Activated naive CD4-positive, alpha-beta T cell treated with anti-CD3 and anti-CD28 coated beads, Interleukin-2, amount 10 ng/mL, durations not matched to agents 7 days and 5 days (primary cell): ENCODE measurements at regions of chr19 and their contacts with region 1.

Region 1: GRCh38 chr19:44570984-44571684 is 41.7 kb upstream of the CEACAM20 start:
- DNase-seq: peak; percentile 70
- H3K4me3 Mint-ChIP-seq: no peak overlapping the region
- H3K27ac Mint-ChIP-seq: no peak overlapping the region
- H3K4me1 Mint-ChIP-seq: no peaks in the 10 kb centered on the region
- H3K27me3 Mint-ChIP-seq: no peaks in the 10 kb centered on the region

Region 2: DNA sequence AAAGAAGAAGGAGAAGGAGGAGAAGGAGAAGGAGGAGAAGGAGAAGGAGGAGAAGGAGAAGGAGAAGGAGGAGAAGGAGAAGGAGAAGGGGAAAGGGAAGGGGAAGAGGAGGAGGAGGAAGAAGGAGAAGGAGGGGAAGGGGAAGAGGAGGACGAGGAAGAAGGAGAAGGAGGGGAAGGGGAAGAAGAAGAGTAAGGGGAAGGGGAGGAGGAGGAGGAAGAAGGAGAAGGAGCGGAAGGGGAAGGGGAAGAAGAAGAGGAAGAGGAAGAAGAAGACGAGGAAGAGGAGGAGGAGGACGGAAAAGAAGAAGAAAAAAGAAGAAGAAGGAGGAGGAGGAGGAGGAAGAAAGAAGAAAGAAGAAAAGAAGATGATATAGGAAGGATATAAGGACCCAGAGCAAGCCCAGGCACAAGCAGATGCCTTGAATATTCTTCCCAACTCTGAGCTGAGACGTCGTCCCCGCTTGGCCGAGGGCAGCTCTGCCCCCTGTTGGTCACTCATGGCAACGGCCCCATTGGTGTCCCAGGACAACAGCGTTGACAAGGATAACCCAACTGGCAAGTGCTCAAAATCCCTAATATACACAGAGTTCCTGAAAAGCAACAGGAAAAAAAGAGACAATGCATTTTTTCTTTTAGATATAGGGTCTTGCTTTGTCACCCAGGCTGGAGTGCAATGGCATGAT is 11.6 kb after region 1 on chr19:
- CTCF ChIA-PET with region 1: interaction called, 11 read pairs
- DNase-seq: peak; percentile 29
- H3K4me3 Mint-ChIP-seq: no peak overlapping the region
- H3K27ac Mint-ChIP-seq: no peak overlapping the region
- H3K4me1 Mint-ChIP-seq: peaks cover 5% of the 10 kb centered on the region
- H3K27me3 Mint-ChIP-seq: peaks cover 8% of the 10 kb centered on the region

Region 3: DNA sequence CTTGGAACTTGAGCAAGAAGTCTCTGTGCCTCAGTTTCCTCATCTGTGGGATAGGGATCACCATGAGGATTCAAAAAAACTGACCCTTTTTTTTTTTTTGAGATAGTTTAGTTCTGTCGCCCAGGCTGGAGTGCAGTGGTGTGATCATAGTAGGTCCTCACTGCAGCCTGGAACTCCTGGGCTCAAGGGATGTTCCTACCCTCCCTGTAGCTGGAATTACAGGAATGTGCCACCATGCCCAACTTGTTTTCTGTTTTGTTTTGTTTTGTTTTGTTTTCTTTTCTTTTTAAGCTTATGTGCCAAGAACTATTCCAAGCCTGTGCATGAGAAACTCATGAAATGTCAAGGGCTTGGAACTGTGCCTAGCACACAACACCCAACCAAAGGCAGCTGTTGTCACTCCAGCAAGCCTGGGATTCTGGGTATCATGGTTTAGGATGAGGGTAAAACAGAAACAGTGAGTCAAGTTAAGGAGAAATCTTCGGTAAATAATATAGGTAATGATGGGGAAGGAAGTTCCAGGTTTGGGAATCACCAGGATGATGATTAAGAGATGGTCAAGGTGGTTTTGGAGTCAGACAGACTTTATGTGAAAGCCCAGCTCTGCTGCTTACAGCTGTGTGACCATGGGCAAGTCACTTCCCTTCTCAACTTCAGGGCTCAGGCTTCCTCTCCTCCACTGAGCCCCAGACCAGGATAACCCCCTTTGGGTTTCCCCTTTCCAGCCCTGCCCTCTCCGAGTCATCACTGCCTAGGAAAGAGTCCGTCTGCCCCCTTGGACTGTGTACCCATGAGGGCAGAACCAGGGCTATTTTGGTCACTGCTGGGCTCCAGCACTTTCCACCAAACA is 77.5 kb after region 1 on chr19:
- CTCF ChIA-PET with region 1: interaction called, 10 read pairs
- DNase-seq: no peak
- H3K4me3 Mint-ChIP-seq: no peak overlapping the region
- H3K27ac Mint-ChIP-seq: no peak overlapping the region
- H3K4me1 Mint-ChIP-seq: no peaks in the 10 kb centered on the region
- H3K27me3 Mint-ChIP-seq: peaks cover 11% of the 10 kb centered on the region

Region 4: DNA sequence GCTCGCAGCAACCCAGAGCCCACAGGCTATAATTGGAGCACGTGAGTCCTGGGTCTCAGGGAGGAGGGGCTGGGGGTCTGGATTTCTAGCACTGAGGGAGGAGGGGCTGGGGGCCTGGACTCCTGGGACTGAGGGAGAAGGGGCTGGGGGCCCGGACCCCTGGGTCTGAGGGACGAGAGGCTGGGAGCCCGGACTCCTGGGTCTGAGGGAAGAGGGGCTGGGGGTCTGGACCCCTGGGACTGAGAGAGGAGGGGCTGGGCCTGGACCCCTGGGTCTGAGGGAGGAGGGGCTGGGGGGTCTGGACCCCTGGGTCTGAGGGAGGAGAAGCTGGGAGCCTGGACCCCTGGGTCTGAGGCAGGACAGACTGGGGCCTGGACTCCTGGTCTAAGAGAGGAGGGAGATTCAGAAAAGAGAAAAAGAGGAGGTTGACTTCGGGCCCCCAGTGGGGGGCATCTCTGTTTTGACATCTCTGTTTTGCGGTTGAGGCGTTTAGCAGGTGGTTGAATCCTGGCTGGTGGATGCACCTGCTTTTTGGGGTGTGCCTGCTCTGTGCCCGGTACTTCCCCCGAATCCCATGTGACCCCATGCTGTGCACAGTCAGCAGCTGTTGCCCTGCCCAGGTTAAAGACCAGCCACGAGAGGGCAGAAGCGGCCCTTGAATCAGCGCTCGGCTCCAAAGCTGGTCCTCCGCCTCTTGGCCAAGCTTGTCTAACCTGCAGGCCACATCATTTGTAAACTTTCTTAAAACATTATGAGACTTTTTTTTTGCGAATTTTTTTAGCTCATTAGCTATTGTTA is 83.0 kb after region 1 on chr19:
- CTCF ChIA-PET with region 1: interaction called, 30 read pairs
- DNase-seq: peak; percentile 85
- H3K4me3 Mint-ChIP-seq: no peak overlapping the region
- H3K27ac Mint-ChIP-seq: no peak overlapping the region
- H3K4me1 Mint-ChIP-seq: peaks cover 6% of the 10 kb centered on the region
- H3K27me3 Mint-ChIP-seq: no peaks in the 10 kb centered on the region

Region 5: DNA sequence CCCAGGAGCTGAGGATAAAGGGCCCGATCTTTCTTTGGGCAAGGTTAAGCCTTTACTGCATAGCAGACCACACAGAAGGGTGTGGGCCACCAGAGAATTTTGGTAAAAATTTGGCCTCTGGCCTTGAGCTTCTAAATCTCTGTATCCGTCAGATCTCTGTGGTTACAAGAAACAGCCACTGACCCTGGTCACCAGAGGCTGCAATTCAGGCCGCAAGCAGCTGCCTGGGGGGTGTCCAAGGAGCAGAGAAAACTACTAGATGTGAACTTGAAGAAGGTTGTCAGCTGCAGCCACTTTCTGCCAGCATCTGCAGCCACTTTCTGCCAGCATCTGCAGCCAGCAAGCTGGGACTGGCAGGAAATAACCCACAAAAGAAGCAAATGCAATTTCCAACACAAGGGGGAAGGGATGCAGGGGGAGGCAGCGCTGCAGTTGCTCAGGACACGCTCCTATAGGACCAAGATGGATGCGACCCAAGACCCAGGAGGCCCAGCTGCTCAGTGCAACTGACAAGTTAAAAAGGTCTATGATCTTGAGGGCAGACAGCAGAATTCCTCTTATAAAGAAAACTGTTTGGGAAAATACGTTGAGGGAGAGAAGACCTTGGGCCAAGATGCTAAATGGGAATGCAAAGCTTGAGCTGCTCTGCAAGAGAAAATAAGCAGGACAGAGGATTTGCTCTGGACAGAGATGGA is 91.7 kb after region 1 on chr19:
- CTCF ChIA-PET with region 1: interaction called, 30 read pairs
- DNase-seq: no peak
- H3K4me3 Mint-ChIP-seq: no peak overlapping the region
- H3K27ac Mint-ChIP-seq: no peak overlapping the region
- H3K4me1 Mint-ChIP-seq: no peaks in the 10 kb centered on the region
- H3K27me3 Mint-ChIP-seq: no peaks in the 10 kb centered on the region